ENCODE measurements at regions of chr15 and their contacts with region 1.

Region 1: GRCh38 chr15:63752075-63752684 is 81.6 kb downstream of the HERC1 start:
- DNase-seq: peak; percentile 52
- ATAC-seq: peak; percentile 92
- H3K4me3 Mint-ChIP-seq: no peak overlapping the region
- H3K27ac Mint-ChIP-seq: no peak overlapping the region
- H3K4me1 Mint-ChIP-seq: peaks cover 4% of the 10 kb centered on the region
- H3K27me3 Mint-ChIP-seq: no peaks in the 10 kb centered on the region

Region 2: GRCh38 chr15:63212050-63213004 is 539.9 kb before region 1 on chr15:
- CTCF ChIA-PET with region 1: no interaction called
- POLR2A ChIA-PET with region 1: no interaction called
- intact Hi-C with region 1: no loop called
- DNase-seq: peak; percentile 44
- ATAC-seq: peak; percentile 70
- H3K4me3 Mint-ChIP-seq: peak overlapping the region; percentile 53
- H3K27ac Mint-ChIP-seq: peak overlapping the region; percentile 98
- H3K4me1 Mint-ChIP-seq: peaks cover 91% of the 10 kb centered on the region
- H3K27me3 Mint-ChIP-seq: no peaks in the 10 kb centered on the region

Region 3: GRCh38 chr15:63573533-63573932 is 178.6 kb before region 1 on chr15:
- CTCF ChIA-PET with region 1: no interaction called
- POLR2A ChIA-PET with region 1: no interaction called
- intact Hi-C with region 1: no loop called
- DNase-seq: no peak
- ATAC-seq: peak; percentile 58
- H3K4me3 Mint-ChIP-seq: no peak overlapping the region
- H3K27ac Mint-ChIP-seq: peak overlapping the region; percentile 45
- H3K4me1 Mint-ChIP-seq: peaks cover 18% of the 10 kb centered on the region
- H3K27me3 Mint-ChIP-seq: no peaks in the 10 kb centered on the region

Region 4: DNA sequence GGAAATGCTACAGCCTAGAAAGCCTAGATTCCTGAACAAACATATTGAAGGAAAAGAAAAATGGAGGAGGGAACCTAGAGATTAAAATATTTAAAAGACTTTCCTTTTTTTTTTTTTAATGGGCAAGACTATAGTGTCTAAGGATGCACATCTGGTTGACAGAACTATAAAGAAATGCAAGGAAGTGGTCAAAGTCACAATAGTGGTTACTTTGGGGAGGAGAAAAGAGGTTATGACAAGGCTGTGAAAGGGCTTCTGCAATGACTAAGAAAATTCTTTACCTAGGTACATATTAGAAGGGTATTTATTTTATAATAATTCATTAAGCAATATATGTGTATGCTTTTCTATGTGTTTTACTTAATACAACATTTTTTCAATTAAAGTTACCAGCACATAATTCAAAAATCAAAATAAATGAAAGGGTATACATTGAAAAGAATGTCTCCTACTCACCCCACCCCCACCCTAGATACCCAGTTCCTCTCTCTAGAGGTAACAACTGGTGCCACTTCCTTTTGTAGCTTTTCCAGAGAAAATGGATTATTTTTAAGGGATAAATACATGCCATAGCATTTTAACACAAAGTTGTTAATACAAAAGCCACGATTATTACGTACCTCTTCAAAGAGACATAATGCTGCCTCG is 11.4 kb after region 1 on chr15:
- CTCF ChIA-PET with region 1: interaction called, 32 read pairs
- POLR2A ChIA-PET with region 1: no interaction called
- intact Hi-C with region 1: no loop called
- DNase-seq: no peak
- ATAC-seq: peak; percentile 76
- H3K4me3 Mint-ChIP-seq: no peak overlapping the region
- H3K27ac Mint-ChIP-seq: peak overlapping the region; percentile 76
- H3K4me1 Mint-ChIP-seq: peaks cover 51% of the 10 kb centered on the region
- H3K27me3 Mint-ChIP-seq: no peaks in the 10 kb centered on the region

Region 5: DNA sequence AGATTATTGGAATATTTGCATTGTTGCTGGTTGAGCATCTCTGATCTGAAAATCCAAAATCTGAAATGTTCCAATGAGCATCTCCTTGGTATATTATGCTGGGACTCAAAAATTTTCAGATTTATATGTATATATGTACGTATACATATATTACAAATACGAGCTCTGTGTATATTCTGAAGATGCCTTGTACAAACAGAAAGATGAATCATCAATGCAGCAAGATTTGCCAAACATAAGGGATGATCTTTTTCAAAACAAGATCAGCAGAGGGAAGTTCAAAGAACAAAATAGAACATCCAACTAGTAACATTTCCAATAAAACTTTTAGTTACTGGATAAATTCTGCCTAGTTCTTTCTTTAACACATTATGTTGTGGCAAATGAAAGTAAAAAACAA is 39.0 kb after region 1 on chr15:
- CTCF ChIA-PET with region 1: interaction called, 11 read pairs
- POLR2A ChIA-PET with region 1: interaction called, 4 read pairs
- intact Hi-C with region 1: no loop called
- DNase-seq: no peak
- ATAC-seq: no peak
- H3K4me3 Mint-ChIP-seq: no peak overlapping the region
- H3K27ac Mint-ChIP-seq: peak overlapping the region; percentile 15
- H3K4me1 Mint-ChIP-seq: peaks cover 35% of the 10 kb centered on the region
- H3K27me3 Mint-ChIP-seq: no peaks in the 10 kb centered on the region

Region 6: DNA sequence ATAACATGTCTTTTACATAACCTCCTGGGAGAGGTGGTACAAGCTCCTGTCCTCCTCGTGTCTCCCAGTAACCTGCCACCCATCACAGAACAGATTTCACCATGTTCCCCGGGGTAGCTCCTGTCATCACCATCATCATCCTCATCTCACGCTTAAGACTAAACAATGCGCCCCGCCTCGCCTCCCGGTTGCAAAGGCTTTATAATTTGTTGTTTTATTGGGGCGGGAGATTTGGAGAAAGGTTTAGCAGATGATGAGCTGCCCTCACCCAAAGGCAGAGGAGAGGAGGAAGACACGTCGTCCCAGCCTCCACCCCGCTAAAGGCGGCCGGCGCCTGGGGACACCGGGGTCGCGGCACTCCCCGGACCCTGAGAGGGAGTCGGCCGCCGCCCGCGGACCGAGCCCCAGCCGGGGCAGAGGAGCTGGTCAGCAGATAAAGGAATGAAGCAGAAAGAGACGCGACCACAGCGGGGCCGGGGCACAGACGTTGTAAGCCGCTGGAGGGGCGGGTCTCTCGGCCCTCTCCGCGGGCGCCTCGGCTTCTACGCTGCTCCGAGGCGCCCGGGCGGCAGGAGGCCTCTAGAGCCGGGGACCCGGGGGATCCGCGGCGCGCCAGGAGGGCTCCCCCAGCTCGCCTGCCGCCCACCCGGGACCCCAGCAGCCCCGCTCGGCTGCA is 81.0 kb after region 1 on chr15:
- CTCF ChIA-PET with region 1: interaction called, 12 read pairs
- POLR2A ChIA-PET with region 1: interaction called, 3 read pairs
- intact Hi-C with region 1: loop called (anchors 2 kb)
- DNase-seq: peak; percentile 64
- ATAC-seq: peak; percentile 50
- H3K4me3 Mint-ChIP-seq: peak overlapping the region; percentile 87
- H3K27ac Mint-ChIP-seq: peak overlapping the region; percentile 91
- H3K4me1 Mint-ChIP-seq: peaks cover 50% of the 10 kb centered on the region
- H3K27me3 Mint-ChIP-seq: no peaks in the 10 kb centered on the region

Region 7: DNA sequence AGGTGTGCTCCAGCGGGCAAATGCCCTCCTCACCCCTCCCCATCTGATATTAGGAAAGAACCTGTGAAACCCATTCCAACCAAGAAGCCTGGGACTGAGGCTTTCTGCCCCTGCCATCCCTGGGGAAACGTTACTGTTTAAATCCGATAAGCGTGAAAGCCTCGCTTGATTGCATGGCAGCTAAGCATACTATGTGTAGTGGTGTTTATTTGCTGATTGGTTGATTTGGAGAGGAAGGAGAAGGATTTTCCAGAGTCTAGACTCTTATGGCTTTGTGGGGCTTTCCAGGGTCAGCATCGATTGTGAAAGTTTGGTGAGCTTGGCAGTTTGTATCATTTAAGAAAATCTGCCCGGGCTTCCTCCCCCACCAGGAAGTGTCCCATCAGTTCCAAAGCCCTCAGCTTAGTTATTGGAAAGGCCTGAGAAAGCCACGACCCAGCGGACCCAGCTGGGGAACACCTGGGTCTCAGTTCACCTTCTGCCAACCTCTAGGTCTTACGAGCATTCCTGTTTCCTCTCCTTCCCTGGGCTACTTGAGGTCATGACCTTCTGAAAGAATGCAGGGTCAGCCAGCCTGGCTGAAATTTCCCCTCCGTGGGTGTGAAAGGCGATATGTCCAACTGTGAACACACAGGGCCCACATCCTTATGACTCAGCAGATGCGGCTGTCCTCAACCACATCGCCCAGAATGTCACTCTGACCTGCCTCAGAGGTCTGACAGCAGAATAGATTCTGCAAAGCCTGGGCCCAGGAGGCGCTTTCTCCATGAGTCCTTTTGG is 144.3 kb after region 1 on chr15:
- CTCF ChIA-PET with region 1: interaction called, 81 read pairs
- POLR2A ChIA-PET with region 1: no interaction called
- intact Hi-C with region 1: loop called (anchors 1 kb)
- DNase-seq: peak; percentile 46
- ATAC-seq: peak; percentile 18
- H3K4me3 Mint-ChIP-seq: no peak overlapping the region
- H3K27ac Mint-ChIP-seq: no peak overlapping the region
- H3K4me1 Mint-ChIP-seq: peaks cover 63% of the 10 kb centered on the region
- H3K27me3 Mint-ChIP-seq: no peaks in the 10 kb centered on the region

Region 8: DNA sequence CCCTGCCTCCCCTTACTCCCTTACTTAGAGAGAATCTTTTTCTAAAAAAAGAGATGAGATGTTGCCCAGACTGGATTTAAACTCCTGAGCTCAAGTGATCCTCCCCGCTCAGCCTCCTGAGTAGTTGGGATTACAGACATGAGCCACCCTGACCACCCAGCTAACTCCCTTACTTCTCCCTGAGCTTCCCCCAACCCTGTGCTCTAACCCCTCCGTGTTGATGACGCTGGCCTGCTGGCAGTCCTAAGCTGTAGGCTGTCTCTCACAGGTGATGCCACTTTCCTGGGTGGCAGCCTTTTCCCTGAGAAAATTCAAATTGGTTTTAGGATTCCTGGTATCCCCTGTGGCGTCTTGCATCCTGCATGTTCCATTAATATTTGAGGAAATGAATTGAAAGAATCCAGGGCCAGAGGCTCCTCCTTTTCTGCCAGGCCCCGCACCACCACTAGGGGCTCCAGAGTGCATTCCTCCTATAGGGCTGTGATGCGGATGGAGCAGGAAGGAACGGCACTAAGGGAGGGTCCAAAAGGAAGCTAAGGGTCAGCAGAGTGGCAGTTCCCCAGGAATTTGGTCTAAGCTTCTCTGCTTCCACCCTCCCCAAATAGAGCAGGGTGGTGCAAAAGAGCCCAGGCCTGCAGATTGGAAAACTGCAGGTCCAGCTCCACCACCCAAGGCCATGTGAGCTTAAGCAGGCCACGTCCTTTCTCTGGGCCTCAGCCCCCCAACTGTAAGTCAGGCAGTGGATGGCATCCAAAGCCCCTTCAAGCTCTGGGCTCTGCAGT is 193.0 kb after region 1 on chr15:
- CTCF ChIA-PET with region 1: interaction called, 18 read pairs
- POLR2A ChIA-PET with region 1: no interaction called
- intact Hi-C with region 1: no loop called
- DNase-seq: peak; percentile 85
- ATAC-seq: peak; percentile 97
- H3K4me3 Mint-ChIP-seq: no peak overlapping the region
- H3K27ac Mint-ChIP-seq: peak overlapping the region; percentile 51
- H3K4me1 Mint-ChIP-seq: peaks cover 4% of the 10 kb centered on the region
- H3K27me3 Mint-ChIP-seq: no peaks in the 10 kb centered on the region

Region 9: DNA sequence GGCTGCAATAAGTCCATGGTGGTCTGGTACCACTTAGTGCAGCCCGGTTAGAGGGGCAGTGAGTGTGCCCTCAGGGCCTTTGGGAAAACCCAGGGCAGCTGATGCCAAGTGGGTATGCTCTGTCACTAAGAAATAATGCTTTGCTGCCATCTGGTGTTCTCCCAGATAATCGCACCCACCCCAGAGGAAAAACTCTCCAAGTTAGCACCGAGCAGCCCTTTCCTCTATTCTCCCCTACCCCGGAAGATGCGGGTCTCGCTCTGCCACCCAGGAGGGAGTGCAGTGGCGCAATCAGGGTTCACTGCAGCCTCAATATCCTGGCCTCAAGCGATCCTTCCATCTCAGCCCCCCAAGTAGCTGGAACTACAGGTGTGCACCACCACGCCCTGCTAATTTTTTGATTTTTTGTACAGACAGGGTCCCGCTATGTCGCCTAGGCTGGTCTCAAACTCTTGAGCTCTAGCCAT is 315.4 kb after region 1 on chr15:
- CTCF ChIA-PET with region 1: interaction called, 129 read pairs
- POLR2A ChIA-PET with region 1: no interaction called
- intact Hi-C with region 1: loop called (anchors 1 kb)
- DNase-seq: peak; percentile 78
- ATAC-seq: peak; percentile 86
- H3K4me3 Mint-ChIP-seq: no peak overlapping the region
- H3K27ac Mint-ChIP-seq: no peak overlapping the region
- H3K4me1 Mint-ChIP-seq: peaks cover 6% of the 10 kb centered on the region
- H3K27me3 Mint-ChIP-seq: no peaks in the 10 kb centered on the region